ENCODE measurements at regions of chr20 and their contacts with region 1.

Region 1: GRCh38 chr20:43537921-43538877 is 20.6 kb upstream of the SGK2 start:
- DNase-seq: peak; percentile 86
- ATAC-seq: peak; percentile 68
- H3K4me3 ChIP-seq: no peak overlapping the region
- H3K27ac ChIP-seq: no peak overlapping the region
- H3K4me1 ChIP-seq: peaks cover 18% of the 10 kb centered on the region
- H3K27me3 ChIP-seq: no peaks in the 10 kb centered on the region
- CTCF ChIP-seq: peak; percentile 99

Region 2: DNA sequence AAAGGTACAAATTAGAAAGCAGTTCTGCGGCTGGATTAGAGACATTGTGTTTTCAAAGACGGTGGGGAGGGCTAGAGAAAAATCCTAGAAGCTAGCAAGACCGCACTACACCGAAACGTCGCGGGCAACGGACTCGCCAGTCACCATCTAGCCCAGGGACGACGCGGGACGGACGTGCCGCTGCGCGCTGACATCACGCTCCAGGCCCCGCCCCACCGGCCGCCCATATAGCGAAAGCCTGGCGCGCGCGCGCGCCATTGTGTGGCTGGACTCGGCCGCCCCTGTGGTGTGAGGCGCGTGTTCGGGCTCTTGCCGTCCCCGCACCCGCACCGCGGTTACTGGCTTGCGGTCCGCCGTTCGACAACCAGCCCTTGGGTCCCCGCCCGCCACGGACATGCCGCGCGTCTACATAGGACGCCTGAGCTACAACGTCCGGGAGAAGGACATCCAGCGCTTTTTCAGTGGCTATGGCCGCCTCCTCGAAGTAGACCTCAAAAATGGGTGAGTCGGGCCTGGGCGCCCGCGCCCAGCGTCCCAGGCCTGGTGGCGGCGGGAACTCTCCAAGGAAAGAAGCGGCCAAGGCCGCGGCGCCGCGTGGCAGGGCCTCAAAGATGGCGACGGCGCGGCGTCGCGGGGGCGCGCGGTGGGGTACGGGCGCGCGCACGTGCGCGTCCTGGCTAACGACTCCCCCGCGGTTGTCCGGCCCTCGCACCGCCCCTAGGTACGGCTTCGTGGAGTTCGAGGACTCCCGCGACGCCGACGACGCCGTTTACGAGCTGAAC is 80.4 kb before region 1 on chr20 and contains the start of gene SRSF6:
- CTCF ChIA-PET with region 1: no interaction called
- POLR2A ChIA-PET with region 1: no interaction called
- intact Hi-C with region 1: no loop called
- DNase-seq: peak; percentile 92
- ATAC-seq: peak; percentile 90
- H3K4me3 ChIP-seq: peak within 1 kb of the TSS; percentile 99
- H3K27ac ChIP-seq: peak within 1 kb of the TSS; percentile 89
- H3K4me1 ChIP-seq: peaks cover 9% of the 10 kb centered on the region
- H3K27me3 ChIP-seq: no peaks in the 10 kb centered on the region
- CTCF ChIP-seq: no peak
- total RNA-seq, gene SRSF6: 75.7 and 77.3 TPM in 2 replicates

Region 3: DNA sequence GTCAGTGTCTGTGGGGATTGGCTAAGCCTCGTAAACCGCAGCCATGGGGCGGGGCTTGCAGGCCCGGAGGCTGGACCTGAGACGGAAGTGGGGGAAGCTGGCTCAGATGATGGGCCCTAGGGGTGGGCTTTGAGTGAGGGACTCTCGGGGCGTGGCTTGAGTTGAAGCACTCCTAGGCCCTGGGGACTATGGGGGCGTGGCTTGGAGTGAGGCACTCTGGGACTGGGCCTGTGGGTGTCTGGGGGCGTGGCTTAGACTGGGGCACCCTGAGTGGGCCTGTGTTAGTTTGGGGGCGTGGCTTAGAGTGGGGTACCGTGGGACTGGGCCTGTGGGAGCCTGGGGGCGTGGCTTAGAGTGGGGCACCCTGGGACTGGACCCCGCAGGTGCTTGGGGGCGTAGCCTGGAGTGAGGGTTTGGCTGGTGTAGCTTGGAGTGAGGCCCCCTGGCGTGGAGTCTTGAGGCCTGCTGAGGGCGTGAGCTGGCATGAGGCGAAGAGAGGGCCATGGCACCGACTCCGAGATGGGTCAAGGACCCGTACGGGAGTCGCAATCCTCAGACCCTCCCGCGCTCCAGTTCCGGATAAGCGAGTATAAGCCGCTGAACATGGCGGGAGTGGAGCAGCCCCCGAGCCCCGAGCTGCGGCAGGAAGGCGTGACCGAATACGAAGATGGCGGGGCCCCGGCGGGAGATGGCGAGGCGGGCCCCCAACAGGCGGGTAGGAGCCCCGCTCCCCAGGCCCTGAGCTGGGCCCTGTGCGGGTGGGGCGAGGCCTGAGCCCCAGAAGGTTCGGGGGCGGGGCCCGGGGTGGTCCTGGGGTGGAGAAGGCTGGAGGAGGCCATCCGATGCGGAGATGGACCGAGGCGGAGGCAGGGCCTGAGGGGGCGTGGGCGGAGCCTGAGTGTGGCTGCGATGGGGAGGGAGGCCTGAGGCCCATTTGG is 23.9 kb before region 1 on chr20:
- CTCF ChIA-PET with region 1: interaction called, 13 read pairs
- POLR2A ChIA-PET with region 1: interaction called, 3 read pairs
- intact Hi-C with region 1: no loop called
- DNase-seq: peak; percentile 99
- ATAC-seq: peak; percentile 88
- H3K4me3 ChIP-seq: peak overlapping the region; percentile 78
- H3K27ac ChIP-seq: 0 out of 2 replicates have a peak overlapping the region, but pooled peaks have one; percentile 7
- H3K4me1 ChIP-seq: peaks cover 16% of the 10 kb centered on the region; the same call in 1 of the 2 replicates
- H3K27me3 ChIP-seq: no peaks in the 10 kb centered on the region
- CTCF ChIP-seq: peak; percentile 48; the same call in 1 of the 2 replicates

Region 4: GRCh38 chr20:43590392-43591323 is 52.5 kb after region 1 on chr20 and contains the start of gene IFT52:
- CTCF ChIA-PET with region 1: interaction called, 9 read pairs
- POLR2A ChIA-PET with region 1: interaction called, 15 read pairs
- intact Hi-C with region 1: loop called (anchors 1 kb)
- DNase-seq: peak; percentile 97
- ATAC-seq: peak; percentile 99
- H3K4me3 ChIP-seq: peak within 1 kb of the TSS; percentile 93
- H3K27ac ChIP-seq: peak within 1 kb of the TSS; percentile 66
- H3K4me1 ChIP-seq: peaks cover 14% of the 10 kb centered on the region
- H3K27me3 ChIP-seq: no peaks in the 10 kb centered on the region
- CTCF ChIP-seq: no peak
- total RNA-seq, gene IFT52: 22.9 and 23.0 TPM in 2 replicates

Region 5: DNA sequence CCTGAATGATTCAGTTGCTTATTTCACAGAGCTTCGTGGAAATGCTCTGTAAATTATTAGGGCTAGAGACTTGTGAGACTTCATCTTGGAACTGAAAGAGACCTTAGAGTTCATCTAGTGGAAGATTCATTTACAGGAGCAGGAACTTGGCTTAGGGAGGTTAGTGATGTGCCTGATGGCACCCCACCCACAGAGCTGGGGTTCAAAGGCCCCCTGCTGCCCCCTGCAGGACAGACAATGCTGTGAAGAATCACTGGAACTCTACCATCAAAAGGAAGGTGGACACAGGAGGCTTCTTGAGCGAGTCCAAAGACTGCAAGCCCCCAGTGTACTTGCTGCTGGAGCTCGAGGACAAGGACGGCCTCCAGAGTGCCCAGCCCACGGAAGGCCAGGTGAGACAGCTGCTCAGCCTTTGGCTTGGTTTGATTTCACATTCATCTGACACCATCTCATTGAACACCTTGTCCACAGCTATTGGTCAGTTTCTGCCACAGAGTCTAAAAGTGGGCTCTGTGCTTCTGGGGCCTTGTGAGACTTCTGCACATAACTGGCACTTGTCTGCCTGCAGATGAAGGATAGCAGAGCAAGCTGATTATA is 153.8 kb after region 1 on chr20:
- CTCF ChIA-PET with region 1: interaction called, 9 read pairs
- POLR2A ChIA-PET with region 1: no interaction called
- intact Hi-C with region 1: loop called (anchors 1 kb)
- DNase-seq: peak; percentile 65
- ATAC-seq: peak; percentile 80
- H3K4me3 ChIP-seq: no peak overlapping the region
- H3K27ac ChIP-seq: no peak overlapping the region
- H3K4me1 ChIP-seq: no peaks in the 10 kb centered on the region
- H3K27me3 ChIP-seq: no peaks in the 10 kb centered on the region
- CTCF ChIP-seq: peak; percentile 87